Activated CD4-positive, alpha-beta memory T cell treated with anti-CD3 and anti-CD28 coated beads for 36 hours (primary cell): ENCODE measurements at regions of chr17 and their contacts with region 1.

Region 1: GRCh38 chr17:81860756-81861518 is 602 bp upstream of the P4HB start:
- DNase-seq: peak; percentile 100
- H3K4me3 Mint-ChIP-seq: peak overlapping the region; percentile 95
- H3K27ac Mint-ChIP-seq: peak overlapping the region; percentile 96
- H3K4me1 Mint-ChIP-seq: peaks cover 48% of the 10 kb centered on the region
- H3K27me3 Mint-ChIP-seq: no peaks in the 10 kb centered on the region

Region 2: GRCh38 chr17:81471804-81472456 is 389.0 kb before region 1 on chr17:
- CTCF ChIA-PET with region 1: no interaction called
- POLR2A ChIA-PET with region 1: no interaction called
- intact Hi-C with region 1: no loop called
- DNase-seq: peak; percentile 45
- H3K4me3 Mint-ChIP-seq: no peak overlapping the region
- H3K27ac Mint-ChIP-seq: no peak overlapping the region
- H3K4me1 Mint-ChIP-seq: no peaks in the 10 kb centered on the region
- H3K27me3 Mint-ChIP-seq: no peaks in the 10 kb centered on the region

Region 3: DNA sequence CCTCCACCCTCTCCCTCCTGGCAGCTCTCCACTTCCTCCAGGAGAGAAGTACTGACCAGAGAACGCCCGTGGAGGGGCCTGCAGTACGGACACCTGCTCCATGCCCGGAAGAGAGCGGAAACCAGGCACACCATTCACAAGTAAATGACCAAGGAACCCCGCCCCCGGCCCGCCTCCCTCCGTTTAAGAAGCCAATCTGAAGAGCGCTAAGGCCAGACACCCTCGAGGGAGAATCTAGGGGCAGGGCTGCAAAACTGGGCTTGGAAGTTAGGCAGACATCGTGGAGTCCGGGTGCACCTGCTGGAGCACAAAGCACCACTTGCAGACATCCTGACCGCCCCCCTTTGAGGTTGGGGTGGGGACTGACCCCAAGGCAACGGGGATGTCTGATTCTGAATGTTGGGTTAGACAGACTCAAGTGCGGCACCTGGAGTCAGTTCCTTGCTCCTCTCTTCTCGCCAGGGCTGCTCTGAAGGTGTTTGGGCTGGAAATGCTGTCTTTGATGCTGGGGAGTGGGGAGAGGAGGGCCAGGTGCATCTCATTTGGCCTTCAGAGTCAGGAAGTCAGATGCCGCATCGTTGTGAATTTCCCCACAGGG is 307.8 kb before region 1 on chr17:
- CTCF ChIA-PET with region 1: no interaction called
- POLR2A ChIA-PET with region 1: no interaction called
- intact Hi-C with region 1: loop called (anchors 1 kb)
- DNase-seq: peak; percentile 88
- H3K4me3 Mint-ChIP-seq: peak overlapping the region; percentile 86
- H3K27ac Mint-ChIP-seq: peak overlapping the region; percentile 88
- H3K4me1 Mint-ChIP-seq: peaks cover 33% of the 10 kb centered on the region
- H3K27me3 Mint-ChIP-seq: no peaks in the 10 kb centered on the region

Region 4: GRCh38 chr17:81833160-81833920 is 27.6 kb before region 1 on chr17 and contains the start of gene MCRIP1:
- CTCF ChIA-PET with region 1: no interaction called
- POLR2A ChIA-PET with region 1: interaction called, 5 read pairs
- intact Hi-C with region 1: loop called (anchors 1 kb)
- DNase-seq: peak; percentile 97
- H3K4me3 Mint-ChIP-seq: peak within 1 kb of the TSS; percentile 97
- H3K27ac Mint-ChIP-seq: peak within 1 kb of the TSS; percentile 96
- H3K4me1 Mint-ChIP-seq: peaks cover 20% of the 10 kb centered on the region
- H3K27me3 Mint-ChIP-seq: no peaks in the 10 kb centered on the region
- total RNA-seq, gene MCRIP1: 67.4 to 68.3 TPM

Region 5: GRCh38 chr17:81917565-81918332 is 56.8 kb after region 1 on chr17 and contains the start of gene SIRT7:
- CTCF ChIA-PET with region 1: no interaction called
- POLR2A ChIA-PET with region 1: no interaction called
- intact Hi-C with region 1: no loop called
- DNase-seq: peak; percentile 90
- H3K4me3 Mint-ChIP-seq: peak within 1 kb of the TSS; percentile 85
- H3K27ac Mint-ChIP-seq: peak within 1 kb of the TSS; percentile 75
- H3K4me1 Mint-ChIP-seq: peaks cover 24% of the 10 kb centered on the region
- H3K27me3 Mint-ChIP-seq: no peaks in the 10 kb centered on the region
- total RNA-seq, gene SIRT7: 32.0 to 33.1 TPM

Region 6: GRCh38 chr17:81977211-81978027 is 116.5 kb after region 1 on chr17 and contains the start of gene ASPSCR1:
- CTCF ChIA-PET with region 1: no interaction called
- POLR2A ChIA-PET with region 1: no interaction called
- intact Hi-C with region 1: loop called (anchors 1 kb)
- DNase-seq: peak; percentile 91
- H3K4me3 Mint-ChIP-seq: peak within 1 kb of the TSS; percentile 92
- H3K27ac Mint-ChIP-seq: peak within 1 kb of the TSS; percentile 92
- H3K4me1 Mint-ChIP-seq: peaks cover 33% of the 10 kb centered on the region
- H3K27me3 Mint-ChIP-seq: no peaks in the 10 kb centered on the region
- total RNA-seq, gene ASPSCR1: 25.4 to 27.1 TPM